Mammary epithelial cell (primary cell): ENCODE measurements at regions of chr2 and their contacts with region 1.

Region 1: GRCh38 chr2:34096562-34097171 is 497.6 kb upstream of the FAM98A start:
- DNase-seq: peak; percentile 47
- H3K4me3 ChIP-seq: no peak overlapping the region
- H3K27ac ChIP-seq: no peak overlapping the region
- H3K4me1 ChIP-seq: no peaks in the 10 kb centered on the region
- H3K27me3 ChIP-seq: no peaks in the 10 kb centered on the region
- CTCF ChIP-seq: peak; percentile 71 to 79

Region 2: GRCh38 chr2:34069604-34070003 is 27.1 kb before region 1 on chr2:
- CTCF ChIA-PET with region 1: no interaction called
- dilution Hi-C with region 1: no loop called
- in situ Hi-C with region 1: no loop called
- intact Hi-C with region 1: no loop called
- DNase-seq: no peak
- H3K4me3 ChIP-seq: no peak overlapping the region
- H3K27ac ChIP-seq: no peak overlapping the region
- H3K4me1 ChIP-seq: no peaks in the 10 kb centered on the region
- H3K27me3 ChIP-seq: no peaks in the 10 kb centered on the region
- CTCF ChIP-seq: no peak

Region 3: GRCh38 chr2:34112161-34112560 is 15.5 kb after region 1 on chr2:
- CTCF ChIA-PET with region 1: no interaction called
- dilution Hi-C with region 1: no loop called
- in situ Hi-C with region 1: no loop called
- intact Hi-C with region 1: no loop called
- DNase-seq: no peak
- H3K4me3 ChIP-seq: no peak overlapping the region
- H3K27ac ChIP-seq: no peak overlapping the region
- H3K4me1 ChIP-seq: no peaks in the 10 kb centered on the region
- H3K27me3 ChIP-seq: no peaks in the 10 kb centered on the region
- CTCF ChIP-seq: no peak

Region 4: GRCh38 chr2:34570266-34570872 is 473.7 kb after region 1 on chr2:
- CTCF ChIA-PET with region 1: interaction called, 7 read pairs
- dilution Hi-C with region 1: no loop called
- in situ Hi-C with region 1: loop called in 1 of 2 experiments (anchors 10 kb)
- intact Hi-C with region 1: loop called (anchors 2 kb)
- DNase-seq: peak; percentile 49
- H3K4me3 ChIP-seq: no peak overlapping the region
- H3K27ac ChIP-seq: no peak overlapping the region
- H3K4me1 ChIP-seq: no peaks in the 10 kb centered on the region
- H3K27me3 ChIP-seq: no peaks in the 10 kb centered on the region
- CTCF ChIP-seq: peak; percentile 29 to 70

Region 5: GRCh38 chr2:35343135-35343534 is 1246.5 kb after region 1 on chr2:
- CTCF ChIA-PET with region 1: no interaction called
- dilution Hi-C with region 1: no loop called
- in situ Hi-C with region 1: no loop called
- intact Hi-C with region 1: loop called (anchors 2 kb)
- DNase-seq: no peak
- H3K4me3 ChIP-seq: no peak overlapping the region
- H3K27ac ChIP-seq: no peak overlapping the region
- H3K4me1 ChIP-seq: no peaks in the 10 kb centered on the region
- H3K27me3 ChIP-seq: no peaks in the 10 kb centered on the region
- CTCF ChIP-seq: peak; percentile 25 to 49